PC-3 (cell line): ENCODE measurements at regions of chr10 and their contacts with region 1.

Region 1: DNA sequence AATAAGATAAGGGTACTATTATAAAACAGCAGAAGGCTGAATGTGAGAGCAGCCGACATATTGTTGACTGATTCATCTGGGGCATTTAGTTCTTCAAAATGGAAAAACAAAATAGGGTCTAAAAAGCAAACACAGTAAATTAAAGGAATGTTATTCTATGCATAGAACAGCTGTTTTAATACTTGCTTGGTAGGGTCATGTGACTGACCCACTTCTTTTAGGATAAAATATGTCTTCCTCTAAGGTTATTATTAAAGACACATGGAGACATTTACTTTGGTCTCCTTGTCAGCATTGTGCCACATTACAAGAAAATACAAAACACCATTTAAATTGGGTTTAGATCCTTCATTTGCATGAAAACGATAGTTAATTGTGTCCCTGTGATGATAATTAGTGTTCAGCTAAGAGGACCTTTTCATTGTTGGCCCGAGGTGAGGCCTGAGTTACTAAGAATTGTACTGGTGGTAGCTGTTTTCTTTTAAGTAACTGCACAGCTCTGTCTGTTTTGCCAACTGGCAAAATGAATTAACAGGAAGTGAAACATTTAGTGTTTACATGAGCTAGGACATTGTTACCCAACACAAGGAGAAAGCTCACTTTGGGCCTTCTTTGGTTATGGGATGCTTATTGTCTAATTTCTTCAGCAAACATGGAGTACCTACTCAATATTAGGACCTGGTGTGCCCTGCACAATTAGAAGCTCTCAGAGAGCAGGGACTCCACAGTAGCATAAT is 764.4 kb downstream of the LRMDA start:
- DNase-seq: no peak
- ATAC-seq: no peak
- H3K4me3 ChIP-seq: no peak overlapping the region
- H3K27ac ChIP-seq: no peak overlapping the region
- H3K4me1 ChIP-seq: no peaks in the 10 kb centered on the region
- H3K27me3 ChIP-seq: peaks cover 83% of the 10 kb centered on the region
- CTCF ChIP-seq: no peak

Region 2: GRCh38 chr10:76172020-76172419 is 23.8 kb before region 1 on chr10:
- CTCF ChIA-PET with region 1: no interaction called
- POLR2A ChIA-PET with region 1: interaction called, 13 read pairs
- intact Hi-C with region 1: no loop called
- DNase-seq: peak; percentile 72
- ATAC-seq: peak; percentile 62
- H3K4me3 ChIP-seq: no peak overlapping the region
- H3K27ac ChIP-seq: no peak overlapping the region
- H3K4me1 ChIP-seq: no peaks in the 10 kb centered on the region
- H3K27me3 ChIP-seq: peaks cover 69% of the 10 kb centered on the region
- CTCF ChIP-seq: no peak

Region 3: DNA sequence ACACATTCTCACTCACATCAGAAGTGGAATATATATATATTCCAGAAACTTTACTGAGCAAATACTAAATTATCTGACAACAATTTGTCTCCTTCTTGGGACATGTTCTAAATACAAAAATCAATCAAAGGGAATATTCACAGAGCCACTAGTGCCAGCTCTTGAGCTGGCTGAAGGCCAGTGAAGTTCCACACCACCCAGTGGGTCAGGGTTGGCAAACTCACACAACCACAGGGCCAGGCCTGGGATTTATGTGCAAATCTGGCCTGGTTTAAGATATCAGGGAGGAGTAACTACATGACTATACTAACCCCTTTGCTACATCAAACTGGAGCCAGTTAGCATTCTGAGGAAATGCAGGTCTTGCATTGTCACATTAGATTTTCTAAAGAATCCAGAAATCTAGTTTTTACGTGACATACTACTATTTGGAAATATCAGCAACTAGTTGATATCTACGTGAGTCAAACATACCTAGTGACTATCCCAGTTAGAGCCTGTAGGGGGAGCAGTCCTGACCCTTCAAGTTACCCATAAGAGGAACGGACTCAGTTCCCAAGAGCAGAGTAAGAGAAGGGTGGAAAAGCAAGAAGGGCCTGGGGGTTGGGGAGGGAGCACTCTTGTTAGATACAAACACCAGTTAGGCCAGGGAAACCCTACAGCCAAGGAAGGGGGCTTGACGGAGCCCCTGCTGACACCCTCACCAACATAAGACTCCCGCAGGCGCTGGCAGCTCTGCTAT is 841.3 kb after region 1 on chr10:
- CTCF ChIA-PET with region 1: no interaction called
- POLR2A ChIA-PET with region 1: no interaction called
- intact Hi-C with region 1: loop called (anchors 10 kb)
- DNase-seq: peak; percentile 74
- ATAC-seq: 0 out of 2 replicates have a peak, but pooled peaks have one; percentile 8
- H3K4me3 ChIP-seq: no peak overlapping the region
- H3K27ac ChIP-seq: no peak overlapping the region
- H3K4me1 ChIP-seq: peaks cover 7% of the 10 kb centered on the region
- H3K27me3 ChIP-seq: no peaks in the 10 kb centered on the region
- CTCF ChIP-seq: peak; percentile 100